ENCODE measurements at regions of chr3 and their contacts with region 1.

Region 1: DNA sequence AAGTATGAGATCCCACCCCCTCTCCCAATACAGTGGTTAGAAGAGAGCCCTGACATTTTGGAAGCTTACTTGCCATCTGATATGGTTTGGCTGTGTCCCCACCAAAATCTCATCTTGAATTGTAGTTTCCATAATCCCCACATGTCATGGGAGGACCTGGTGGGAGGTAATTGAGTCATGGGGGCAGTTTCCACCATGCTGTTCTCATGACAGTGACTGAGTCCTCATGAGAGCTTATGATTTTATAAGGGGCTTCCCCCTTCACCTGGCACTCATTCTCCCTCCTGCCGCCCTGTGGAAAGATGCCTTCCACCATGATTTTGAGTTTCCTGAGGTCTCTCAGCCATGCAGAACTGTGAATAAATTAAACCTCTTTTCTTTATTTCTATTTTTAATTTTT is 28.8 kb upstream of the HES1 start:
- DNase-seq: no peak
- H3K4me3 ChIP-seq: no peak overlapping the region
- H3K27ac ChIP-seq: no peak overlapping the region
- H3K4me1 ChIP-seq: peaks cover 22% of the 10 kb centered on the region
- H3K27me3 ChIP-seq: no peaks in the 10 kb centered on the region
- CTCF ChIP-seq: no peak

Region 2: DNA sequence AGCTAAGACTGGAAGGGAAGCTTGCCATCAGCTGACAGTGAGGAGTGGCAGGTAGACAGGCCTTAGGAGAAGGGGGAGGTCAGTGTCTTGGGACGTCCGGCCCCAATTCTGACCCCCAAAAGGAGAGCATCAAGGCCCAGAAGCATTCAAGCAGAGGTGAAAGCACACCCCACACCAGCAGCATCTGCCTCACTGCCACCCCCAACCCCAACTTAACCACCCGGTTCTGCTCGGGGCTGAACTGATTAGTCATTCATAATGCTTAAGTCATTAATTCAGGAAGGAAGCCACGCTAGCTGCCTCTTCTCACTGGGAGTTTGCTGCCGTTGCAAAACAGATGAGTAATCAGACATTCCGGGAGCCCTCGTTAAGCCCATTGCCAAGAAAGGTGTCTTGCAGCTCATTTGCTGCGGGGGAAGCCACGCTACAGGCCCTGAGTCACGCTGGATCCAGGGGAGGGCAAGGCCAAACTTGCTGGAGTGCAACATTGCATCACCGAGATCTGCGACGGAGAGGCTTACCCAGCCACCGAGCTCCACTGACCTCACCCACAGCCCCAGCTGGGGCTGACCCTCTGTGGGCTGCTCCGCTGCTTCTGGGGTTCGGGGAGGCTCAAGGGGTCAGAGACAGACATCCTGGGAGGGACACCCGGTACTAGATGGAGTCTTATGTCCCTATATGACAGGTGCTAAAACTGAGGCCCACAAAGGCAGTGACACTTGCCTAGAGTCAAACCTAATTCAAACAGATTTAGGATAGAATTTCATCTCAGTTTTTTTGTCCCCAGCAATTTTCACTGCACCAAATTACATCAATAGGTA is 17.5 kb before region 1 on chr3:
- CTCF ChIA-PET with region 1: no interaction called
- POLR2A ChIA-PET with region 1: interaction called, 24 read pairs
- intact Hi-C with region 1: no loop called
- DNase-seq: peak; percentile 99
- H3K4me3 ChIP-seq: no peak overlapping the region
- H3K27ac ChIP-seq: peak overlapping the region; percentile 94
- H3K4me1 ChIP-seq: peaks cover 80% of the 10 kb centered on the region
- H3K27me3 ChIP-seq: no peaks in the 10 kb centered on the region
- CTCF ChIP-seq: no peak

Measured in A673 (cell line).